Psoas muscle (tissue), 8 donors: ENCODE measurements at regions of chr11 and their contacts with region 1.

Region 1: DNA sequence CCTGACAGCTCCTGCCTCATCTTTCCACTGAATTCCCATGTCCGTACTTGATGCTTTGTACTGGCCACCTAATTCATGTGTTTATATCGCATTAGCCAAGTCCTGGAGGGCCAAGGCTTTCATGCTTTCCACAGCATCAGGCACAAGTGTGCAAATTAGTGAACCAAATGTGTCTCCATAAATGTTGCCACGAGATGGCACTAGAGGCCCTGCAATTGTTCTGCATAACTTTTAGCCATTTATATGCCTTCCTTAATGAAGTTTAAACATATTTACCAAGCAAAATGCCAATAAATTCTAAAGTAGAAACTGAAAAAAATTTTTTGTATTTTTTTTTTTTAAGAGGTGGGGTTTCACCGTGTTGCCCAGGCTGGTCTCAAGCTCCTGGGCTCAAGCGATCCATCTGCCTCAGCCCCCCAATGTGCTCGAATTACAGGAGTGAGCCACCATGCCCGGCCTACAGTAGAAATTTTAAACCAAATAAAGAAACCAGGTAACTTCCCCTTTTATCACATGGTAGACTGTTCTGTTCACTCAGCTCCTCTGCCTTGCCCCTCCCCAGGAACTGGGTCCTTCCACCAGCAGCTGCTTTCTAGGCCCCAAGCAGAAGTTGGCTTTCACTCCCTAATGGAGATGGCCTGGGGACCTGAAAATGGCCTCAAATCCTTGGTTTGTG is 20.8 kb upstream of the IL18BP start:
- DNase-seq: no peak
- ATAC-seq: peak; percentile 43 to 82 (median 70)
- H3K4me3 ChIP-seq: no peak overlapping the region
- H3K27ac ChIP-seq: no peak overlapping the region
- H3K4me1 ChIP-seq: no peaks in the 10 kb centered on the region
- H3K27me3 ChIP-seq: no peaks in the 10 kb centered on the region
- CTCF ChIP-seq: peak; percentile 80

Region 2: DNA sequence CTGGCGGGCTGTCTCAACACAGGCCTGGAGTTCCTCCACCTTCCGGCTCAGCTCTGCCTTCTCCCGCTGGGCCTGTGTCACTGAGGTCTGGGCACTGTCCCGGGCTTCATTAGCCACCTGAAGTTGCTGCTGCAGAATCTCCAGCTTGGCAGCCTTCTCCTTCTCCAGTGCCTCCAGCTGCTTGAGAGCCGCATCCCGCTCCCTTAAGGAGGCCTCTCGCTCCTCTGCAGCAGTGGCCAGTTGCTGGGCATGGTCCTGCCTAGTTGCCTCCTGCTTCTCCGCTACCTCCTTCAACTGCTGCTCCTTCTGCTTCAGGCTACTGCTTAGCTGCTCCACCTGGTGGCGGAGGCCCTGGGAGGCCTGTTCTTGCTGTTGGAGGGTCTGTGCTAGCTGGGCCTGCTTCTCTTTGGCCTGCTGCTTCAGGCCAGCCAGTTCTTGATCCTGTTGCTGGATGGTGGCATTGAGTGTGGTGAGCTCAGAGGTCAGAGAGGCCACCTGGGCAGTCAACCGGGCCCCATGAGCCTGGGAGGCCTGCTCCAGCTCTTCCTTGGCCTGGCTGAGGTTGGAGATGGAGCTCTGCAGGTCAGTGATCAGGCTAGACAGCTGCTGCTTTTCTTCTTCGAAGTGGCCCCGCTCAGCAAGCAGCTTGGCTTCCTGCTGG is 37.8 kb after region 1 on chr11:
- intact Hi-C with region 1: loop called (anchors 5 kb)
- DNase-seq: no peak
- ATAC-seq: no peak
- H3K4me3 ChIP-seq: no peak overlapping the region
- H3K27ac ChIP-seq: peak overlapping the region; percentile 34
- H3K4me1 ChIP-seq: peaks cover 43% of the 10 kb centered on the region
- H3K27me3 ChIP-seq: no peaks in the 10 kb centered on the region
- CTCF ChIP-seq: peak; percentile 17

Region 3: DNA sequence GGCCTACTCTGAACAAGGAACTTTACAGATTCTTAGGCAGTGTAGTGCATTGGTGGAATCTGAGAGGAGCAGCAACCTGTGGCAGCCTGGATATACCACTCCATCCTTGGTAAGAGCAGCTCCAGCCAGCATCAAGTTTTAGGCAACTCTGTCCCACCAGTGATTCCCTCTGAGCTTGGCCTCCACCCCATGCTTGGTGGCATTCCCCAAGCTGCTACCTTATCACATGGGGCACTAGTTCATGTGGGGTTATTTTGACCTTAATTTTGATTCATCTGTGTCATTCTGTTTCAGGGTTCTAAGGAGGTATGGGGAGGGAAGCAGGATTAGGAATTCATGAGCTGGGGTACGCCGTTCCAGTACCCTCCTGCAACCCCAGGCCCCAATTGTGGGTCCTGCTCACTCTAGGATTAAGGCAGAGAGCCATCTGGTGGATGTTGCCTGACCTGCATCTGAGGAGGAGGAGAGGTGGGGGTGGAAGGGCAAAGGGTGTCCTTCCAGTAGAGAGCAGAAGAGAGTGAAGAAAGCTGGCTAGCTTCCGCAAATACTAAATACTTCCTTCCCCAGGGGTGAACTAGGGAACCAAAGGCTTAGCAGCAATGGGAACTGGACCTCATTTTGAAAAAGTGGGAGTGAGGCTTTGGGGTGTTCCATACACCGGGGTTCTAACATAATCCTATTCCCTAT is 113.3 kb after region 1 on chr11:
- intact Hi-C with region 1: loop called in 1 of 2 experiments (anchors 5 kb)
- DNase-seq: peak; percentile 67 to 84
- ATAC-seq: peak; percentile 89 to 96 (median 91)
- H3K4me3 ChIP-seq: no peak overlapping the region
- H3K27ac ChIP-seq: peak overlapping the region; percentile 1
- H3K4me1 ChIP-seq: peaks cover 4% of the 10 kb centered on the region
- H3K27me3 ChIP-seq: no peaks in the 10 kb centered on the region
- CTCF ChIP-seq: peak; percentile 85

Region 4: DNA sequence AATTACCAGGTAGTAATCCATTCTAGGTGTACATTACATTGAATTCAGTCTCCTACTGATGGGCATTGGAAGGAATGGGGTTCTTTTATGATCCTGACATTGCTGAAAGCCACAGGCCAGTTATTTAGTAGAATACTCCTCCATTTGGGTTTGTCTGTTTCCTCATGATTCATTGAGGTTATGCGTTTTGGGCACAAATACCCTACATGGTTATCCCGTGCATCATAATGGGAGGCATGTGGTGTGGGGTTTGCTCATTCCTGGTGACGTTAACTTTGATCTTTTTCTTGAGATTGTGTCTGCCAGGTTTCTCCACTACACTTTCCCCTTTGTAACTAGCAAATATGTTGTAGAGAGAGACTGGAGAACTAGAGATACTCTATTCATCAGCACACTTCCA is 163.2 kb after region 1 on chr11:
- intact Hi-C with region 1: loop called in 1 of 2 experiments (anchors 2 kb)
- DNase-seq: no peak
- ATAC-seq: no peak
- H3K4me3 ChIP-seq: no peak overlapping the region
- H3K27ac ChIP-seq: no peak overlapping the region
- H3K4me1 ChIP-seq: no peaks in the 10 kb centered on the region
- H3K27me3 ChIP-seq: no peaks in the 10 kb centered on the region
- CTCF ChIP-seq: no peak

Region 5: GRCh38 chr11:72430741-72431570 is 453.1 kb after region 1 on chr11:
- intact Hi-C with region 1: loop called in 1 of 2 experiments (anchors 5 kb)
- DNase-seq: no peak
- ATAC-seq: no peak
- H3K4me3 ChIP-seq: no peak overlapping the region
- H3K27ac ChIP-seq: no peak overlapping the region
- H3K4me1 ChIP-seq: peaks cover 22% of the 10 kb centered on the region
- H3K27me3 ChIP-seq: no peaks in the 10 kb centered on the region
- CTCF ChIP-seq: peak; percentile 76

Region 6: DNA sequence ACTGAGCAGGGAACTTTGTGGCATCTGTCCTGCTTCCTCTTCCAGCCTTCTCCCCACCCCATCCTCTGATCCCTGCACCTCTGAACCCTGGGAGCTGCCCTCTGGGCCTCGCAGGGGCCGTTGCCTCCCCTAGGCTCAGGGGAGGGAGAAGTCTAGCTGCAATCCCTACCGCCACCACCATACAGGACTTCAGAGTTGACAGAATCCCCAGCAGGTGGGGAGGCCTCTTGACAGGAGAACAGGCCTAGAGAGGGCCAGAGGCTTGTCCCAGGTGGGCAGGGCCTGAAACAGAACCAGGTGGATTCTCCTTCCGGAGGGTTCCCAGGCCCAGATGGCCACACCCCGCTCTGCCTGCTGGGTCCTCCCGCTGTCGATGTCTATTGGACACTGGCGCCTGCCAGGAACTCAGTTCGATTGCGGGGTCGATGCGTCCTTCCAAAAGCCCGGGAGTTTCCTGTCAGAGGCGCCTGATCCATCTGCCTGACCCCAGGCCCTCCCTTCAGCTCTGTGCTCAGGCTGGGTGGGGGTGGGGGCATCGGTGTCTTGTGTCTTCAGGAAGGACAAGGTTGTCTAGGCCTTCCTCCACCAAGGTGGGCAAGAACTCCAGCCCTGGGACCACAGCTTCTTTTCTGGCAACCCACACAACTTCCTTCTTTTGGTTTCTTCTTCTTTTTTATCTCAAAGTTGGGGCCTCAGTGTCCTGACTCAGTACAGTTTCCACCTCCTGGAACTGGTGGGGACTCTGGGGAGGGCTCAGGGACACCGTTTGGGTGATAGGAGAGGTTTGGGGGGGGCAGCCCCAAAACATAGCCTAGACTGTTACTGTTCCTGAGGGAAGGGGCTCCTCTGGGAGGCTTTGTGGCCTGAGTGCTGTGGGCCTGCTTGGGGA is 809.6 kb after region 1 on chr11:
- intact Hi-C with region 1: no loop called
- DNase-seq: no peak
- ATAC-seq: no peak
- H3K4me3 ChIP-seq: no peak overlapping the region
- H3K27ac ChIP-seq: no peak overlapping the region
- H3K4me1 ChIP-seq: peaks cover 11% of the 10 kb centered on the region
- H3K27me3 ChIP-seq: no peaks in the 10 kb centered on the region
- CTCF ChIP-seq: no peak